Naive thymus-derived CD4-positive, alpha-beta T cell (primary cell): ENCODE measurements at regions of chr19 and their contacts with region 1.

Region 1: GRCh38 chr19:52527134-52527955 is at the start of gene ZNF808:
- DNase-seq: peak; percentile 79 to 95 (median 90)
- ATAC-seq: peak; percentile 99
- H3K4me3 ChIP-seq: peak within 1 kb of the TSS; percentile 99
- H3K4me3 Mint-ChIP-seq: peak within 1 kb of the TSS; percentile 91 to 100 (median 98)
- H3K27ac ChIP-seq: peak within 1 kb of the TSS; percentile 91
- H3K27ac Mint-ChIP-seq: peak within 1 kb of the TSS; percentile 84 to 99 (median 98)
- H3K4me1 ChIP-seq: peaks cover 9 to 12% of the 10 kb centered on the region in 2 donors
- H3K4me1 Mint-ChIP-seq: peaks cover 18 to 34% (median 25%) of the 10 kb centered on the region in 7 donors
- H3K27me3 ChIP-seq: no peaks in the 10 kb centered on the region
- H3K27me3 Mint-ChIP-seq: no peaks in the 10 kb centered on the region
- total RNA-seq, gene ZNF808: 17.7 to 52.4 (median 33.7) TPM

Region 2: GRCh38 chr19:52296773-52297600 is 230.4 kb before region 1 on chr19 and contains the start of gene ZNF480:
- CTCF ChIA-PET with region 1: no interaction called
- POLR2A ChIA-PET with region 1: no interaction called
- intact Hi-C with region 1: loop called in 1 of 2 experiments (anchors 2 kb)
- DNase-seq: peak; percentile 67 to 91 (median 87)
- ATAC-seq: peak; percentile 89
- H3K4me3 ChIP-seq: peak within 1 kb of the TSS; percentile 85
- H3K4me3 Mint-ChIP-seq: peak within 1 kb of the TSS; percentile 89 to 99 (median 98)
- H3K27ac ChIP-seq: peak within 1 kb of the TSS; percentile 97
- H3K27ac Mint-ChIP-seq: peak within 1 kb of the TSS; percentile 95 to 99 (median 98)
- H3K4me1 ChIP-seq: peaks cover 4 to 5% of the 10 kb centered on the region in 2 donors
- H3K4me1 Mint-ChIP-seq: peaks cover 15 to 32% (median 19%) of the 10 kb centered on the region in 7 donors
- H3K27me3 ChIP-seq: no peaks in the 10 kb centered on the region
- H3K27me3 Mint-ChIP-seq: peaks cover 0 to 3% (median 0%) of the 10 kb centered on the region in 5 donors
- total RNA-seq, gene ZNF480: 8.5 to 28.9 (median 13.3) TPM

Region 3: GRCh38 chr19:52397310-52398080 is 129.8 kb before region 1 on chr19 and contains the start of gene ZNF528:
- CTCF ChIA-PET with region 1: no interaction called
- POLR2A ChIA-PET with region 1: no interaction called
- intact Hi-C with region 1: loop called (anchors 2 to 5 kb)
- DNase-seq: peak; percentile 78 to 95 (median 87)
- ATAC-seq: peak; percentile 98
- H3K4me3 ChIP-seq: peak within 1 kb of the TSS; percentile 94
- H3K4me3 Mint-ChIP-seq: peak within 1 kb of the TSS; percentile 80 to 93 (median 90)
- H3K27ac ChIP-seq: peak within 1 kb of the TSS; percentile 65
- H3K27ac Mint-ChIP-seq: peak within 1 kb of the TSS; percentile 88 to 96 (median 91)
- H3K4me1 ChIP-seq: peaks cover 5 to 12% of the 10 kb centered on the region in 2 donors
- H3K4me1 Mint-ChIP-seq: peaks cover 15 to 34% (median 25%) of the 10 kb centered on the region in 7 donors
- H3K27me3 ChIP-seq: no peaks in the 10 kb centered on the region
- H3K27me3 Mint-ChIP-seq: no peaks in the 10 kb centered on the region
- total RNA-seq, gene ZNF528: 10.6 to 47.3 (median 23.0) TPM

Region 4: GRCh38 chr19:52507266-52507665 is 20.1 kb before region 1 on chr19:
- CTCF ChIA-PET with region 1: no interaction called
- POLR2A ChIA-PET with region 1: no interaction called
- intact Hi-C with region 1: no loop called
- DNase-seq: no peak
- ATAC-seq: no peak
- H3K4me3 ChIP-seq: no peak overlapping the region
- H3K4me3 Mint-ChIP-seq: no peak overlapping the region
- H3K27ac ChIP-seq: no peak overlapping the region
- H3K27ac Mint-ChIP-seq: no peak overlapping the region
- H3K4me1 ChIP-seq: no peaks in the 10 kb centered on the region
- H3K4me1 Mint-ChIP-seq: peaks cover 0 to 1% (median 0%) of the 10 kb centered on the region in 7 donors
- H3K27me3 ChIP-seq: no peaks in the 10 kb centered on the region
- H3K27me3 Mint-ChIP-seq: no peaks in the 10 kb centered on the region

Region 5: GRCh38 chr19:52601025-52601973 is 74.0 kb after region 1 on chr19:
- CTCF ChIA-PET with region 1: no interaction called
- POLR2A ChIA-PET with region 1: no interaction called
- intact Hi-C with region 1: loop called (anchors 1 kb)
- DNase-seq: peak; percentile 84 to 94 (median 91)
- ATAC-seq: peak; percentile 100
- H3K4me3 ChIP-seq: peak overlapping the region; percentile 89
- H3K4me3 Mint-ChIP-seq: peak overlapping the region; percentile 86 to 99 (median 92)
- H3K27ac ChIP-seq: peak overlapping the region; percentile 81
- H3K27ac Mint-ChIP-seq: peak overlapping the region; percentile 63 to 93 (median 81)
- H3K4me1 ChIP-seq: peaks cover 10 to 12% of the 10 kb centered on the region in 2 donors
- H3K4me1 Mint-ChIP-seq: peaks cover 11 to 43% (median 37%) of the 10 kb centered on the region in 7 donors
- H3K27me3 ChIP-seq: no peaks in the 10 kb centered on the region
- H3K27me3 Mint-ChIP-seq: no peaks in the 10 kb centered on the region

Region 6: GRCh38 chr19:52942386-52943133 is 415.2 kb after region 1 on chr19:
- CTCF ChIA-PET with region 1: no interaction called
- POLR2A ChIA-PET with region 1: no interaction called
- intact Hi-C with region 1: loop called in 1 of 2 experiments (anchors 5 kb)
- DNase-seq: peak; percentile 88 to 99 (median 95)
- ATAC-seq: peak; percentile 100
- H3K4me3 ChIP-seq: peak overlapping the region; percentile 98
- H3K4me3 Mint-ChIP-seq: peak overlapping the region; percentile 87 to 95 (median 92)
- H3K27ac ChIP-seq: peak overlapping the region; percentile 85
- H3K27ac Mint-ChIP-seq: peak overlapping the region; percentile 33 to 94 (median 89)
- H3K4me1 ChIP-seq: peaks cover 0 to 4% of the 10 kb centered on the region in 2 donors
- H3K4me1 Mint-ChIP-seq: peaks cover 12 to 27% (median 16%) of the 10 kb centered on the region in 7 donors
- H3K27me3 ChIP-seq: no peaks in the 10 kb centered on the region
- H3K27me3 Mint-ChIP-seq: no peaks in the 10 kb centered on the region